ENCODE measurements at regions of chr3 and their contacts with region 1.

Region 1: GRCh38 chr3:186213946-186214345 is 105.1 kb upstream of the ETV5 start:
- DNase-seq: no peak
- H3K4me3 ChIP-seq: no peak overlapping the region
- H3K27ac ChIP-seq: no peak overlapping the region
- H3K4me1 ChIP-seq: peaks cover 11 to 17% (median 12%) of the 10 kb centered on the region in 4 donors
- H3K27me3 ChIP-seq: no peaks in the 10 kb centered on the region
- CTCF ChIP-seq: no peak
- EP300 ChIP-seq: no peak
- POLR2A ChIP-seq: no peak

Region 2: GRCh38 chr3:186185194-186185787 is 28.7 kb before region 1 on chr3:
- in situ Hi-C with region 1: no loop called
- intact Hi-C with region 1: loop called (anchors 2 kb)
- DNase-seq: no peak
- H3K4me3 ChIP-seq: no peak overlapping the region
- H3K27ac ChIP-seq: peak overlapping the region in 3 of 4 donors; percentile 2 to 33 (median 18)
- H3K4me1 ChIP-seq: no peaks in the 10 kb centered on the region
- H3K27me3 ChIP-seq: no peaks in the 10 kb centered on the region
- CTCF ChIP-seq: no peak
- EP300 ChIP-seq: no peak
- POLR2A ChIP-seq: no peak

Measured in transverse colon (tissue), 4 donors.